Naive thymus-derived CD4-positive, alpha-beta T cell (primary cell): ENCODE measurements at regions of chr19 and their contacts with region 1.

Region 1: DNA sequence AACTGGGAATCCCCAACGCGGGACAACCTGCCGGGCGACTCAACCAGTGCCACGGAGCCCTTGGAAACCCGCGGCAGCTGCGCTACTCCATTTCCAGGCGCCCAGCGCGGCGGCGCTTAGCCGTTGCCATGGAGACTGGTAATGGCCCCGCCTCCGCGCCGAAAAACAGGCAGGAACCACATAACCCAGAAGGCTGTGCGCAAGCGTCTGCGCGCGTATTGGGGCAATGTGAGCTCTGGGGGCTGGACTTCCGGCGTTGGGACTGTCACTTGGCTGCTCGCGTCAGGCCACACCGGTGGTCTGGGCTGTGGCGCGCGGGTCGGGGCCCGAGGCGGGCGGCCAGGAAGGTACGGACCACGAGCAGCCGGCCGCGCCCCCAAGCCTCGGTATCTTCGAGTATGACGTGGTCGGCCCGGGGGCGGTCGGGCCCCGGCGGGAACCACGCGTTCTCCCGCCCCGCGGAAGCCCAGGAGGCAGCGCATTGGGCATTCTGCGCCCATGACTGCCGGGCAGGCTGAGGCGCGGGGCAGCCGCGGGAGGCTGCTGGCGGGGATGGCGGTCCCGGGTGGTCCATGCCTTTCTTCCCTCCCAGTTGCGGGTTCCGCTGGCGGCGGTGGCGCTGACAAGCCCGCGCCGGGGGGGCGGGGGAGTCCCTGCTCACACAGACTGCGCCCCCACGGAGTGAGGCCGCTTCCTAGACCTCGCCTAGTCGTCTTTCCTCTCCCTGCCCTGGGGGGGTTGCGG is at the start of gene ZNF324B:
- DNase-seq: peak; percentile 90 to 97 (median 94)
- ATAC-seq: peak; percentile 99
- H3K4me3 ChIP-seq: peak within 1 kb of the TSS; percentile 63
- H3K4me3 Mint-ChIP-seq: peak within 1 kb of the TSS; percentile 85 to 98 (median 88)
- H3K27ac ChIP-seq: peak within 1 kb of the TSS; percentile 81
- H3K27ac Mint-ChIP-seq: peak within 1 kb of the TSS in 8 of 9 donors; percentile 2 to 90 (median 71)
- H3K4me1 ChIP-seq: peaks cover 0 to 4% of the 10 kb centered on the region in 2 donors
- H3K4me1 Mint-ChIP-seq: peaks cover 12 to 23% (median 19%) of the 10 kb centered on the region in 7 donors
- H3K27me3 ChIP-seq: no peaks in the 10 kb centered on the region
- H3K27me3 Mint-ChIP-seq: peaks cover 8 to 26% (median 17%) of the 10 kb centered on the region in 5 donors
- total RNA-seq, gene ZNF324B: 9.1 to 13.9 (median 11.8) TPM

Region 2: GRCh38 chr19:58326914-58327726 is 124.4 kb before region 1 on chr19 and contains the start of gene ZSCAN22:
- CTCF ChIA-PET with region 1: no interaction called
- POLR2A ChIA-PET with region 1: no interaction called
- intact Hi-C with region 1: loop called in 1 of 2 experiments (anchors 1 kb)
- DNase-seq: peak; percentile 65 to 89 (median 78)
- ATAC-seq: peak; percentile 90
- H3K4me3 ChIP-seq: peak within 1 kb of the TSS; percentile 95
- H3K4me3 Mint-ChIP-seq: no peak within 1 kb of the TSS
- H3K27ac ChIP-seq: peak within 1 kb of the TSS; percentile 72
- H3K27ac Mint-ChIP-seq: no peak within 1 kb of the TSS
- H3K4me1 ChIP-seq: peaks cover 14 to 16% of the 10 kb centered on the region in 2 donors
- H3K4me1 Mint-ChIP-seq: peaks cover 0 to 10% (median 6%) of the 10 kb centered on the region in 7 donors
- H3K27me3 ChIP-seq: no peaks in the 10 kb centered on the region
- H3K27me3 Mint-ChIP-seq: no peaks in the 10 kb centered on the region
- total RNA-seq, gene ZSCAN22: 1.1 to 6.0 (median 4.5) TPM

Region 3: DNA sequence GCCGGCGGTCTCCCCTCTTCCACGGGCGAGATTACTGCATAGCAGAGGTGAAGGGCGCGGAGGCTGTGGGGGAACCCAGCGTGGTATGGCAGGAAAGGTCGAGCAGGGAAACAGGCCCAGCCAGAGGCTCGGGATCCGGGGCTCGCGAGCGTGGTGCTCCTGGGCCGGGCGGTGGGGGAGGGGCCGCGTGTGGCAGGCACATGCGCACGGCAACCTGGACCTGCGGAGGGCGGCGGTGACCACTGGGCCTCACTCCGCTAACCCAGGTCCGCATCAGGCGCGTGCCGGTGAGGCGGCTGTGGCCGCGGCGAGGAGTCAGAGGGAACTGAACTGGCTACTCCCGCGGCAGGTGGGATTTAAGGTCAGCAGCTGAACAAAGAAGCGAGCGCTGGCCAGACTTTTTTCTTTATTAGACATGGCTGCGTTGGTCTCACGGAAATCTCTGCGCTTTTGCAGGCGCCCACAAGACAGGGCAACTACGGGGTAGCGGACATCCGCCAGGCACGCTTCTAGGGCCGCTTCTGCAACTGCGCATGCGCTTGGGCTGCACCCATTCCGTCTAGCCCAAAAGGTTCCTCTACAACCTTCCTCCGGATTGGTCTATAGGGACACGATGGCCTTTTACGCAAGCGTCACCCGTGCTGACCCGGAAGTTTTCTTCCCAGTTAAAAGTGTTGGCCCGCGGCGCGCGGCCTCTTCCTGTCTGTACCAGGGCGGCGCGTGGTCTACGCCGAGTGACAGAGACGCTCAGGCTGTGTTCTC is 64.8 kb before region 1 on chr19 and contains the start of gene RPS5:
- CTCF ChIA-PET with region 1: interaction called, 3 read pairs
- POLR2A ChIA-PET with region 1: no interaction called
- intact Hi-C with region 1: loop called (anchors 1 kb)
- DNase-seq: peak; percentile 84 to 98 (median 96)
- ATAC-seq: peak; percentile 97
- H3K4me3 ChIP-seq: peak within 1 kb of the TSS; percentile 75
- H3K4me3 Mint-ChIP-seq: peak within 1 kb of the TSS; percentile 89 to 96 (median 94)
- H3K27ac ChIP-seq: peak within 1 kb of the TSS; percentile 94
- H3K27ac Mint-ChIP-seq: peak within 1 kb of the TSS; percentile 94 to 99 (median 97)
- H3K4me1 ChIP-seq: peaks cover 26% of the 10 kb centered on the region in 2 donors
- H3K4me1 Mint-ChIP-seq: peaks cover 22 to 59% (median 45%) of the 10 kb centered on the region in 7 donors
- H3K27me3 ChIP-seq: no peaks in the 10 kb centered on the region
- H3K27me3 Mint-ChIP-seq: peaks cover 0 to 3% (median 0%) of the 10 kb centered on the region in 5 donors
- total RNA-seq, gene RPS5: 911 to 1,684 (median 1,502) TPM

Region 4: GRCh38 chr19:58466760-58467589 is 15.4 kb after region 1 on chr19 and contains the start of gene ZNF324:
- CTCF ChIA-PET with region 1: interaction called, 3 read pairs
- POLR2A ChIA-PET with region 1: interaction called, 3 read pairs
- intact Hi-C with region 1: loop called (anchors 1 kb)
- DNase-seq: peak; percentile 92 to 97 (median 95)
- ATAC-seq: peak; percentile 98
- H3K4me3 ChIP-seq: peak within 1 kb of the TSS; percentile 92
- H3K4me3 Mint-ChIP-seq: peak within 1 kb of the TSS; percentile 80 to 89 (median 86)
- H3K27ac ChIP-seq: peak within 1 kb of the TSS; percentile 99
- H3K27ac Mint-ChIP-seq: peak within 1 kb of the TSS in 8 of 9 donors; percentile 67 to 91 (median 85)
- H3K4me1 ChIP-seq: peaks cover 7 to 11% of the 10 kb centered on the region in 2 donors
- H3K4me1 Mint-ChIP-seq: peaks cover 14 to 27% (median 22%) of the 10 kb centered on the region in 7 donors
- H3K27me3 ChIP-seq: no peaks in the 10 kb centered on the region
- H3K27me3 Mint-ChIP-seq: peaks cover 0 to 3% (median 0%) of the 10 kb centered on the region in 5 donors
- total RNA-seq, gene ZNF324: 14.2 to 28.0 (median 23.4) TPM

Region 5: GRCh38 chr19:58499021-58499927 is 47.7 kb after region 1 on chr19:
- CTCF ChIA-PET with region 1: no interaction called
- POLR2A ChIA-PET with region 1: no interaction called
- intact Hi-C with region 1: loop called in 1 of 2 experiments (anchors 2 kb)
- DNase-seq: peak; percentile 76 to 96 (median 87)
- ATAC-seq: peak; percentile 93
- H3K4me3 ChIP-seq: peak overlapping the region; percentile 66
- H3K4me3 Mint-ChIP-seq: peak overlapping the region; percentile 88 to 98 (median 94)
- H3K27ac ChIP-seq: peak overlapping the region; percentile 72
- H3K27ac Mint-ChIP-seq: peak overlapping the region; percentile 90 to 97 (median 95)
- H3K4me1 ChIP-seq: peaks cover 12 to 15% of the 10 kb centered on the region in 2 donors
- H3K4me1 Mint-ChIP-seq: peaks cover 8 to 32% (median 21%) of the 10 kb centered on the region in 7 donors
- H3K27me3 ChIP-seq: no peaks in the 10 kb centered on the region
- H3K27me3 Mint-ChIP-seq: no peaks in the 10 kb centered on the region

Region 6: GRCh38 chr19:58543826-58544590 is 92.5 kb after region 1 on chr19 and contains the start of gene TRIM28:
- CTCF ChIA-PET with region 1: no interaction called
- POLR2A ChIA-PET with region 1: no interaction called
- intact Hi-C with region 1: loop called in 1 of 2 experiments (anchors 1 kb)
- DNase-seq: peak; percentile 100
- ATAC-seq: peak; percentile 92
- H3K4me3 ChIP-seq: peak within 1 kb of the TSS; percentile 97
- H3K4me3 Mint-ChIP-seq: peak within 1 kb of the TSS; percentile 94 to 99 (median 96)
- H3K27ac ChIP-seq: peak within 1 kb of the TSS; percentile 83
- H3K27ac Mint-ChIP-seq: peak within 1 kb of the TSS; percentile 96 to 100 (median 99)
- H3K4me1 ChIP-seq: peaks cover 16% of the 10 kb centered on the region in 2 donors
- H3K4me1 Mint-ChIP-seq: peaks cover 28 to 43% (median 36%) of the 10 kb centered on the region in 7 donors
- H3K27me3 ChIP-seq: no peaks in the 10 kb centered on the region
- H3K27me3 Mint-ChIP-seq: peaks cover 0 to 33% (median 0%) of the 10 kb centered on the region in 5 donors
- total RNA-seq, gene TRIM28: 396 to 564 (median 435) TPM